HEK293T (cell line): ENCODE measurements at regions of chr1 and their contacts with region 1.

Region 1: DNA sequence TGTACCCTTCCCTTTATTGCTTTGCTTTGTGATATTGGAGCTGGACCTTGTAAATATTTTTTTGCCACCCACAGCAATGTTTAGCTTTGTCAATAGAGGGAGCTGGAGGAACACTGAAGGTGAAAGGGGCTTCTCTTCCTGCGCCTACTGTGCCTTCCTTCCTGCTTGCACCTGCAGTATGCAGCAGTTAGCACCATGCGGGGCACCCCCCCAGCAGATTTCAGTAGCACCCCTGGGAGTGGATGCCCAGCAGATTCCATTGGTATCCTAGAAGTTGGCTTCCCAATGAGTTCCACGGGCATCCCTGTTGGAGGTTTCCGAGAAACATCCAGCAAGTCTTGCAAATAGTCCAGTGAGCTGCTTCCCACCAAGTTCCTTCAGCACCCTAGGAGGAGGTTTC is 25.6 kb downstream of the S100A10 start:
- DNase-seq: peak; percentile 67

Region 2: GRCh38 chr1:151934048-151934493 is 34.0 kb before region 1 on chr1:
- CTCF ChIA-PET with region 1: interaction called, 31 read pairs
- POLR2A ChIA-PET with region 1: interaction called, 3 read pairs
- DNase-seq: peak; percentile 74

Region 3: GRCh38 chr1:151939779-151940178 is 28.3 kb before region 1 on chr1:
- CTCF ChIA-PET with region 1: interaction called, 31 read pairs
- POLR2A ChIA-PET with region 1: interaction called, 3 read pairs
- DNase-seq: no peak

Region 4: DNA sequence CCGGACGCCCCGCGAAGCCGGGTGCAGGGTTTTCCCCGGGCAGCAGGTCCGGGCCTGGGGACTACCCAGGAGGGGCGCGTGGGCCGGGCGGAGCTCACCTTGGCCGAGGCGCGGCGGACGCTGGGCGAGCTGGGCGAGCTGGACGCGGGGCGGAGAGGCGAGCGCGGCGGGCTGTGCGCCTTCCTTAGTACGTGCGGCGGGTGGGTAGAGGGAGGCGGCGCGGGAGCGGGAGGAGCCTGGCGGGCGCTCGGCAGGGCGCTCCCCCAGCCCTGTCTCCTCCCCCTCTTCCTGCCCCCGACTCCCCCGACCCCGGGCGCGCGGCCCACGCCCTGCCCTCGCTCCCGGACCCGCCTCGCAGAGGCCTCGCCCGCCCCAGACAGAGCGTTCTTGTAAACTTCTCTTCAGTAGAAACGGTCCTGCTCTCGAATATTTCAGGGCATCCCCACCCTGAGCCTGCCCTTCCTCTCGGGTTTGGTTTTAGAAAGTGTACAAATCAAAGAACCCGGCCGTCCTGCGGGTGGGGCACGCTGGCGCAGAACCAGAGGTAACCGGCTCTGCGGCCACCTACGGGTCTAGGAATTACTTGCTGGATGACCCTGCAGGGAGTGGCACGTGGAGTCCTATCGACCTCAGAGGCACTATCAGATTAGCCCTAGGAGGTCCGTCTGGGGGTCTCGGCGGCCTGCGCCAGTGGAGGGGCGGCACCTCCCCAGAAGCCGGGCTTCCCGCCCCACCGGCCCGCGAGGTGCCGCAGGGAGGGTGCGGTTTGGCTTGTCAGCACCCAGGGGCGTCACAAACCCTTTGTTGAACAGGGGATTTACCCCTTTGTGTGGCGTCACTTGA is 25.8 kb after region 1 on chr1 and contains the start of gene S100A10:
- CTCF ChIA-PET with region 1: interaction called, 98 read pairs
- POLR2A ChIA-PET with region 1: interaction called, 45 read pairs
- DNase-seq: peak; percentile 63

Region 5: DNA sequence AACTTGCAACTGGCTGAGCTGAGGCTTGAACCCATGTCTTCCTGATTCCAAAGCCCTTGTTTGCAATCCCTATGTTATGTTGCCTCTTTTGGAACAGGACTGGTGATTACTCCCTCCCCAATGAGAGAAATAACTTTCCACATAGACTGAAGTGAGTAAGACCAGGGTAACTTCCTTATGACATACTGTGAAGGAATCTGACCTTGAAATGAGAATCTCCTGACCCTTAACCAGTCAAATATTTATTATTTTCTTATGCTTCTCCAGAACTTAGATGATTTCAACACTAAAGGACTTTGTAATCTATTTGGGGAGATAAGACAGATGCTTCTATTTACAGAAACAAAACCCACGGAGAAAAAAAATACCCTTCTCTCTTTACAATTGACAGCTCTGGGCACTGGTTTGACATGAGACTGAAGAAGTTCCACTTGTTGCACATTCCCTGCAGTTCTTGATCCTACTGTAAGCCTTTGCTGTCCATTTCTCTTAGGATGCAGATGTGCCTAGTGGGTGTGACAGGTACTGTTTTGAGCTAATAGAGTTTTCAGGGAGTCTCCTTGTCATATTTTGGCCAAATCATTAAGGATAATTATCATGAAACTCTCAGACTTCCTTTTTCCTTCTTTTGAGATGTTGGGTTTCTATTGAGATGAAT is 194.9 kb after region 1 on chr1:
- CTCF ChIA-PET with region 1: no interaction called
- POLR2A ChIA-PET with region 1: no interaction called
- DNase-seq: no peak